Panc1 (cell line): ENCODE measurements at regions of chr1 and their contacts with region 1.

Region 1: GRCh38 chr1:12477936-12478611 is 139.9 kb downstream of the DHRS3 start:
- DNase-seq: peak; percentile 78
- ATAC-seq: peak; percentile 91
- H3K4me3 ChIP-seq: no peak overlapping the region
- H3K27ac ChIP-seq: peak overlapping the region; percentile 99
- H3K4me1 ChIP-seq: peaks cover 64% of the 10 kb centered on the region
- H3K27me3 ChIP-seq: no peaks in the 10 kb centered on the region
- CTCF ChIP-seq: no peak

Region 2: GRCh38 chr1:12528021-12528852 is 50.2 kb after region 1 on chr1:
- CTCF ChIA-PET with region 1: no interaction called
- POLR2A ChIA-PET with region 1: interaction called, 3 read pairs
- in situ Hi-C with region 1: no loop called
- intact Hi-C with region 1: loop called (anchors 5 kb)
- DNase-seq: peak; percentile 41
- ATAC-seq: peak; percentile 85
- H3K4me3 ChIP-seq: no peak overlapping the region
- H3K27ac ChIP-seq: peak overlapping the region; percentile 76
- H3K4me1 ChIP-seq: peaks cover 33% of the 10 kb centered on the region
- H3K27me3 ChIP-seq: no peaks in the 10 kb centered on the region
- CTCF ChIP-seq: no peak

Region 3: GRCh38 chr1:12640237-12640957 is 162.3 kb after region 1 on chr1:
- CTCF ChIA-PET with region 1: no interaction called
- POLR2A ChIA-PET with region 1: no interaction called
- in situ Hi-C with region 1: no loop called
- intact Hi-C with region 1: no loop called
- DNase-seq: no peak
- ATAC-seq: no peak
- H3K4me3 ChIP-seq: no peak overlapping the region
- H3K27ac ChIP-seq: no peak overlapping the region
- H3K4me1 ChIP-seq: no peaks in the 10 kb centered on the region
- H3K27me3 ChIP-seq: no peaks in the 10 kb centered on the region
- CTCF ChIP-seq: no peak